Naive thymus-derived CD4-positive, alpha-beta T cell (primary cell): ENCODE measurements at regions of chr7 and their contacts with region 1.

Region 1: DNA sequence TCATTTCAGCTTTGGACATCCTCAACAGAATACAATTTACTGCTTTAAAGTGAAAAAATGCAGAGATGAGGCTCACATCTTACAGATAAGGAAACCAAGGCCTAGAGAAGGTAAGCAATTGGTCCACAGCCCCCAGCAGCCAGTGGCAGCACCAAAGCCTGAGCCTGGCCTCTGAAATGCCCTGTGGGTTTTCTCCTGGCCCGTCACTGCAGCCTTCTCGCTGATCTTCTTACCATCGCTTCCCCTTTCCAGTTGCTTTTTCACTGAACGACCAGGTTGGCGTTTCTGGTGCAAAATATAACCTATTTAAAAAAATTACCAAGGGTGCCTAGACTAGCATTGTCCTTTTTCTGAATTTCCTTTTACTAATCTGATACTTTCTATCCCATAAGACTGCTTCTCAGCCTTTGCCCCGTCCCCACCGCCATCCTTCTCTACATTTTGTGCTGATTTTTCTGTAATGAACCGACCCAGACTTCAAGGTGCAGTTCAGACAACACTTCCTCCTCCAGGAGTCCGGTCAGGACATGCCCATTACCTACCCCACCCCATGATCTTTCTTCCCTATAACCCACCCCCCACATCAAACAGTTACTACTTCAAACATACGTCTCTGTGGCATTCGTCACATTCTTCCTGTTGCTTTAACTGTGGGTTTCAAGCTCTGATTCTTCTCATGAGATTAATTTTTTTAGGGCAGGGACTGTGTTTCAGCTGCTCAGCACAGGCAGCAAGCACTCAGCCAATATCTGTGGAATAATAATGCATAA is 289.4 kb downstream of the DNAJB6 start:
- DNase-seq: peak in 7 of 9 donors; percentile 54 to 83 (median 80)
- ATAC-seq: peak; percentile 79
- H3K4me3 ChIP-seq: peak overlapping the region; percentile 18
- H3K4me3 Mint-ChIP-seq: peak overlapping the region; percentile 69 to 84 (median 76)
- H3K27ac ChIP-seq: no peak overlapping the region
- H3K27ac Mint-ChIP-seq: peak overlapping the region; percentile 28 to 96 (median 89)
- H3K4me1 ChIP-seq: peaks cover 15 to 71% of the 10 kb centered on the region in 2 donors
- H3K4me1 Mint-ChIP-seq: peaks cover 41 to 81% (median 77%) of the 10 kb centered on the region in 7 donors
- H3K27me3 ChIP-seq: no peaks in the 10 kb centered on the region
- H3K27me3 Mint-ChIP-seq: peaks cover 0 to 48% (median 4%) of the 10 kb centered on the region in 5 donors

Region 2: DNA sequence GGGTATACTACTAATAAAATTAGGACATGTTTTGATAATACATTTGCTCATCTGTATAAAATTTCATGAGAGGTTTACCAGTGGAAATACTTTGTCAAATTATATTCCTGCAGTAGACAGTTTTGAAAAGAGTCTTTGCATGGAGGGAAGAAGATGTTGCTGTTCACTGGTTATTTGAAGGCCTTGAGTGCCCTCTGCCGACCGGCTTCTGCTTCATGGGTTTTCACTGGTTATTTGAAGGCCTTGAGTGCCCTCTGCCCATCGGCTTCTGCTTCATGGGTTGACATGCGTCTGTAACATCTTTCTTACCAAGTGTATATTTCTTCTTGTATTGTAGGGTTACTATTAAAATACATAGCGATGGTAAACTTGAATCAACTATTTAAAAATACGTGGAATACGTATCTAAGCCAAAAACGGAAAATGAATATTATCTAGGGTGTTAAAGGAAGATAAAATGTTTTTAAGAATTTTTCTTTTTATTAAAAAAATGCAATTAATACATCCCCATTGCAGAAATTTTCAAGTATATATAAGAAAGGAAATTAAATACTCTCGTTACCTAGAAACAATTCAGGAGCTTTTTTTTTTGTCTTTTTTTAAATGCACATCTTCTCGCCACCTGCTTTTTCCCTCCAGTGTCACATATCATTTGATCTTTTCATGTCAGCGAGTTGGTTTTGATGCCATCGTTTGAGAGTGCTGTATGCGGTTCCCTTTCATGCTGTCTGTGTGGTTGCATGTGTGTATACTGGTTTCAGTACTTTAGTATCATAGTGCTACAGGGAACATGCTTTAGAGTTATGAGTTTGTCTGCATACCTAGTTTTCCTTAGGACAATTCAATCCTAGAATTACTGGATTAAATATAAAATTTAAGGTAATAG is 1887.3 kb before region 1 on chr7:
- CTCF ChIA-PET with region 1: no interaction called
- POLR2A ChIA-PET with region 1: no interaction called
- intact Hi-C with region 1: no loop called
- DNase-seq: peak; percentile 27 to 85 (median 77)
- ATAC-seq: peak; percentile 93
- H3K4me3 ChIP-seq: no peak overlapping the region
- H3K4me3 Mint-ChIP-seq: peak overlapping the region in 9 of 10 donors; percentile 15 to 71 (median 62)
- H3K27ac ChIP-seq: peak overlapping the region; percentile 30
- H3K27ac Mint-ChIP-seq: peak overlapping the region; percentile 24 to 97 (median 87)
- H3K4me1 ChIP-seq: peaks cover 0 to 12% of the 10 kb centered on the region in 2 donors
- H3K4me1 Mint-ChIP-seq: peaks cover 17 to 71% (median 49%) of the 10 kb centered on the region in 7 donors
- H3K27me3 ChIP-seq: no peaks in the 10 kb centered on the region
- H3K27me3 Mint-ChIP-seq: no peaks in the 10 kb centered on the region

Region 3: GRCh38 chr7:157568770-157569584 is 57.2 kb before region 1 on chr7:
- CTCF ChIA-PET with region 1: no interaction called
- POLR2A ChIA-PET with region 1: no interaction called
- intact Hi-C with region 1: loop called in 1 of 2 experiments (anchors 2 kb)
- DNase-seq: peak; percentile 36 to 73 (median 64)
- ATAC-seq: peak; percentile 84
- H3K4me3 ChIP-seq: peak overlapping the region; percentile 54
- H3K4me3 Mint-ChIP-seq: peak overlapping the region; percentile 87 to 98 (median 92)
- H3K27ac ChIP-seq: no peak overlapping the region
- H3K27ac Mint-ChIP-seq: peak overlapping the region; percentile 63 to 95 (median 82)
- H3K4me1 ChIP-seq: peaks cover 11 to 15% of the 10 kb centered on the region in 2 donors
- H3K4me1 Mint-ChIP-seq: peaks cover 12 to 33% (median 24%) of the 10 kb centered on the region in 7 donors
- H3K27me3 ChIP-seq: no peaks in the 10 kb centered on the region
- H3K27me3 Mint-ChIP-seq: peaks cover 0 to 6% (median 0%) of the 10 kb centered on the region in 5 donors

Region 4: GRCh38 chr7:157612664-157613561 is 13.2 kb before region 1 on chr7:
- CTCF ChIA-PET with region 1: interaction called, 5 read pairs
- POLR2A ChIA-PET with region 1: interaction called, 61 read pairs
- intact Hi-C with region 1: loop called in 1 of 2 experiments (anchors 1 kb)
- DNase-seq: peak; percentile 50 to 86 (median 79)
- ATAC-seq: peak; percentile 88
- H3K4me3 ChIP-seq: peak overlapping the region; percentile 79
- H3K4me3 Mint-ChIP-seq: peak overlapping the region; percentile 76 to 93 (median 86)
- H3K27ac ChIP-seq: peak overlapping the region; percentile 63
- H3K27ac Mint-ChIP-seq: peak overlapping the region; percentile 80 to 97 (median 88)
- H3K4me1 ChIP-seq: peaks cover 0 to 8% of the 10 kb centered on the region in 2 donors
- H3K4me1 Mint-ChIP-seq: peaks cover 8 to 37% (median 23%) of the 10 kb centered on the region in 7 donors
- H3K27me3 ChIP-seq: no peaks in the 10 kb centered on the region
- H3K27me3 Mint-ChIP-seq: peaks cover 0 to 4% (median 0%) of the 10 kb centered on the region in 5 donors

Region 5: GRCh38 chr7:157690833-157691585 is 64.9 kb after region 1 on chr7:
- CTCF ChIA-PET with region 1: no interaction called
- POLR2A ChIA-PET with region 1: no interaction called
- intact Hi-C with region 1: loop called in 1 of 2 experiments (anchors 5 kb)
- DNase-seq: peak in 1 of 9 donors; percentile 6
- ATAC-seq: peak; percentile 40
- H3K4me3 ChIP-seq: no peak overlapping the region
- H3K4me3 Mint-ChIP-seq: peak overlapping the region; percentile 58 to 84 (median 79)
- H3K27ac ChIP-seq: no peak overlapping the region
- H3K27ac Mint-ChIP-seq: peak overlapping the region in 2 of 9 donors; percentile 14 to 33
- H3K4me1 ChIP-seq: peaks cover 0 to 26% of the 10 kb centered on the region in 2 donors
- H3K4me1 Mint-ChIP-seq: peaks cover 2 to 47% (median 38%) of the 10 kb centered on the region in 7 donors
- H3K27me3 ChIP-seq: peaks cover 12 to 31% of the 10 kb centered on the region in 2 donors
- H3K27me3 Mint-ChIP-seq: peaks cover 36 to 68% (median 54%) of the 10 kb centered on the region in 5 donors